ENCODE measurements at regions of chr1 and their contacts with region 1.

Region 1: DNA sequence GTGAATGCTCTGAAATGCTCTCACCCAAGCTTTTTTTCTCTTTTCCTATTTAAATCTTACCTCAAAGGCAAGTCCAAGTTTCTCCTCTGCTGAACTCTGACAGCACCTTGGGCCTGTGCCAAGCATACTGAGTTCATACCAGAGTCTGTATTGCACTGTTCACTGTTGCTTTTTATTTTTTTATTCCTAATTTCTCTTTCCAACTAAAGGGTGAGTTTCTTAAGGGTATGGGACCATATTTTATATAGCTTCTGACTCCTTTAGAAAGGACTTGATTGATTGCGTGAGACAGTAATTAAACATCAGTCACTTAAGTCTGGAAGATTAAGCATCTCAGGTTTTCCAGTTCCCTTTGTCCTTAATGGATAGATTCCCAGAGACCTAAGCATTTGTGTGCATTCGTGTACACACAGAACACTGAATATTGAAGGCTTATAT is 69.9 kb downstream of the CACHD1 start:
- DNase-seq: no peak

Region 2: DNA sequence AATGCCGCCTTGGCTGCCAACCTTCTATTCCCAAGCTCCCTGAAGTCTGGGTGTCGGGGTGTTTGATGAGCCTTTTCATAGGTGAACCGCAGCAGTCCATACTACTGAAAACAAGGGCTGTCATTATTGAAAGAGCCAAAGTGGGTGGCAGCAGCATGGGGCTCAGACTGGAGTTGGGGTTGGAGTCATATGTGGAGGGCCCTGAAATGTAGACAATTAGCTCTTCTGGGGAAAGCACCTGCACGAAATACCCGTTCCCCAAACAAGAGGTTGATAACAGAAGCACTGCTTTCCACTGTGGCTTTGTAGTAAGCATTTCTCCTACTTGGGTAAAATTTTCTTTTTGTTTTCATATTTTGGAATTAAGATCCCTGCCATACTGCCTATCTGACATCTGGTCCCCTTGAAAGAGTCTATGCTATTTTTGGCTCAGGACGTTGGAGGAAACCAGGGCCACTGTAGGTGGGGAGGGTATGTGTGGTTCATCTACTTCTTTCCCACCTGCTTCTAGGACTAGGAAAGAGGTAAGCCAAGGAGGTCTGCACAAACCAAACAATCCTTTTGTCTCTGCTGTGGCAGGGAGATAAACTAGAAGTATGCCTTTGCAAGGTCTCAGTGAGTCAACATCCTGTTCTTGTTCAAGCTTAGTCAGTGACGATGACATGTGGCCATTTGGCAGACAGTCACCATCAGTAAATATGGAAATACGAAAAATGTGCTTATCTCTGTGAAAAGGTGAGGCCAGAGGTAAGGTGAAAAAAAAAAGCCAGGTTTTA is 533.3 kb before region 1 on chr1:
- intact Hi-C with region 1: no loop called
- DNase-seq: no peak

Region 3: DNA sequence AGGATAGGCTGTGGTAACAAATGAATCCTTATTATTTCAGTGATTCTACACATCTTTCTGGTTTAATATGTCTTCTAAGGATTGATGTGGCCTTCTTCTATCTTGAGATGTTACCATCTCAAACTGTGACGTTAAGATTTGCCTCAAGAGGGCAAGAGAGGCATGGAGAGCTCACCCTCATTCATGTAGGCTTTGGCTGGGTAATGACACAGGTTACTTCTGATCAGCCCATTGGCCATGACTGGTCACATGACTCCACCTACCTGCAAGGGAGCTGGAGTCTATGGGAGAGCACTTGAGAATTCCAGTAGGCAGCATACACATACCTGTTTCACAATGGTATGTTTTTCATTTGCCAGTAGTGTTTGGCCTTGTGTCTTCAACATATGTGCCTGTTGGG is 39.8 kb before region 1 on chr1:
- intact Hi-C with region 1: loop called (anchors 5 kb)
- DNase-seq: no peak